PC-9 (cell line): ENCODE measurements at regions of chr5 and their contacts with region 1.

Region 1: GRCh38 chr5:69492391-69492922 is at the start of gene OCLN:
- DNase-seq: peak; percentile 83 to 92
- H3K4me3 ChIP-seq: peak within 1 kb of the TSS; percentile 80
- H3K27ac ChIP-seq: peak within 1 kb of the TSS; percentile 99
- H3K4me1 ChIP-seq: peaks cover 44% of the 10 kb centered on the region
- H3K27me3 ChIP-seq: no peaks in the 10 kb centered on the region
- CTCF ChIP-seq: no peak
- total RNA-seq, gene OCLN: 66.5 and 77.4 TPM in 2 replicates

Region 2: GRCh38 chr5:69374911-69375446 is 117.5 kb before region 1 on chr5:
- CTCF ChIA-PET with region 1: no interaction called
- POLR2A ChIA-PET with region 1: no interaction called
- intact Hi-C with region 1: no loop called
- DNase-seq: no peak
- H3K4me3 ChIP-seq: no peak overlapping the region
- H3K27ac ChIP-seq: no peak overlapping the region
- H3K4me1 ChIP-seq: peaks cover 10% of the 10 kb centered on the region
- H3K27me3 ChIP-seq: no peaks in the 10 kb centered on the region
- CTCF ChIP-seq: no peak

Region 3: GRCh38 chr5:69414885-69415583 is 77.4 kb before region 1 on chr5 and contains the start of gene MARVELD2:
- CTCF ChIA-PET with region 1: no interaction called
- POLR2A ChIA-PET with region 1: no interaction called
- intact Hi-C with region 1: loop called (anchors 2 kb)
- DNase-seq: peak; percentile 82 to 91
- H3K4me3 ChIP-seq: peak within 1 kb of the TSS; percentile 82
- H3K27ac ChIP-seq: peak within 1 kb of the TSS; percentile 93
- H3K4me1 ChIP-seq: peaks cover 20% of the 10 kb centered on the region
- H3K27me3 ChIP-seq: no peaks in the 10 kb centered on the region
- CTCF ChIP-seq: peak; percentile 49
- total RNA-seq, gene MARVELD2: 16.2 and 21.0 TPM in 2 replicates

Region 4: DNA sequence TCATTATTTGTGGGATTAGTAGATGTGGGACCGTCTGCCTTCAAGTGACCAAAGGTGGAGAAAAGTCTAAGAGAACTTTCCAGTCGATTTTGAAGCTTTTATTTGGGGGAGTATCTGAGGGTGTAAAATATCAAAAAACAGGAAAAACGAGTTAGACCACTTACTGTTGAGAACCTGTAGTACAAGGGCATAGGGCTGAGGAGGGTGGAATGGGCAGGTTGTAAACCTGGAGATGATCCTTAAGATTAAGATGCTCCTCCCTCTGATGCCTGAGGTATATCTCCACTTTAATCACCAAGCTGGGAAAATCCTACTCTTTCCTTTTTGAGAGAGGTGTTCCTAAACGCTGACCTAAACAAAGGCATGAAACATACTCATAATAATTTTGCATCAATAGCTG is 35.6 kb after region 1 on chr5:
- CTCF ChIA-PET with region 1: no interaction called
- POLR2A ChIA-PET with region 1: interaction called, 14 read pairs
- intact Hi-C with region 1: loop called (anchors 1 kb)
- DNase-seq: peak; percentile 42 to 91
- H3K4me3 ChIP-seq: peak overlapping the region; percentile 16; the same call in 1 of the 2 replicates
- H3K27ac ChIP-seq: peak overlapping the region; percentile 78
- H3K4me1 ChIP-seq: peaks cover 63% of the 10 kb centered on the region
- H3K27me3 ChIP-seq: no peaks in the 10 kb centered on the region
- CTCF ChIP-seq: no peak